Cardiac septum (tissue), 1 donor: ENCODE measurements at regions of chr19 and their contacts with region 1.

Region 1: DNA sequence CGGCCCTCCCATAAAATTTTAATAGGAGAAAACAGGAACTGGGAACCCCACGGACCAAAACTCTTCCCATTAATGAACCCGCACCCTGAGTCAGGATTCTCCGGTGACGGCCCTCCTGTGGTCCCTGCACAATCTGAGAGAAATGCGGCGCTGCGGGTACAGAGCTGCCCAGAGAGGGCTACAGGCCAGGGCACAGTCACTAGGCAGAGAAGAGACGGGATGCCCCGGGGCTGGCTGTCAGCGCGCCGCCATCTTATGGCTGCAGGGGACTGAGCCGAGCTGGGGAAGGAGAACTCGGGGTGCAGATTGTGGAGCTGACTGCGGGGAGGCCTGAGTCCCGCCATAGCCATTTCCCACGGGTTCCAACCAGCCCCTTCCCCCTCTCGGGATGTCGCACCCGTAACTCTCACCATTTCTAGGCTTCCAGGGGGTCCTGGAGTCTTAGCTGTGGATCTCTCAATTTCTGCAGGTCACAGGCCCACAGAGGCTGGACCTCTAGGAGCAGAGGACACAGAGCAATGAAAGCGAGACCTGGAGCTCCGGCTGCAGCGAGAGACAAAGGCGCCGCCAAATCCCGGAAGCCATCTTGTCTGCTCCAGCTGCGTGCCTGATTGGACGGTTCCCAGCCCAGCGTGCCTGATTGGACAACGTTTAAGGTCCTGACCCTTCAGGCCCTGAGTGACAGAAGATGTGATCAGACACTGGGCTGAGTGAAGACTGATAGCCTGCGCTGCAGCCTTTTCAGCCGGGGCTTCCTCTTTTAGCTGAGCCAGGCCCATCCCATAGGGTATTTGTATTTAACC is at the start of gene ZNF675:
- DNase-seq: peak; percentile 95
- total RNA-seq, gene ZNF675: 3.5 TPM

Region 2: GRCh38 chr19:23384858-23385257 is 302.0 kb before region 1 on chr19:
- intact Hi-C with region 1: loop called (anchors 10 kb)
- DNase-seq: no peak

Region 3: GRCh38 chr19:23665651-23666410 is 21.0 kb before region 1 on chr19:
- intact Hi-C with region 1: no loop called
- DNase-seq: no peak

Region 4: GRCh38 chr19:23758187-23759074 is 71.6 kb after region 1 on chr19 and contains the start of gene ZNF681:
- intact Hi-C with region 1: loop called (anchors 5 kb)
- DNase-seq: peak; percentile 92
- total RNA-seq, gene ZNF681: 0.38 TPM

Region 5: DNA sequence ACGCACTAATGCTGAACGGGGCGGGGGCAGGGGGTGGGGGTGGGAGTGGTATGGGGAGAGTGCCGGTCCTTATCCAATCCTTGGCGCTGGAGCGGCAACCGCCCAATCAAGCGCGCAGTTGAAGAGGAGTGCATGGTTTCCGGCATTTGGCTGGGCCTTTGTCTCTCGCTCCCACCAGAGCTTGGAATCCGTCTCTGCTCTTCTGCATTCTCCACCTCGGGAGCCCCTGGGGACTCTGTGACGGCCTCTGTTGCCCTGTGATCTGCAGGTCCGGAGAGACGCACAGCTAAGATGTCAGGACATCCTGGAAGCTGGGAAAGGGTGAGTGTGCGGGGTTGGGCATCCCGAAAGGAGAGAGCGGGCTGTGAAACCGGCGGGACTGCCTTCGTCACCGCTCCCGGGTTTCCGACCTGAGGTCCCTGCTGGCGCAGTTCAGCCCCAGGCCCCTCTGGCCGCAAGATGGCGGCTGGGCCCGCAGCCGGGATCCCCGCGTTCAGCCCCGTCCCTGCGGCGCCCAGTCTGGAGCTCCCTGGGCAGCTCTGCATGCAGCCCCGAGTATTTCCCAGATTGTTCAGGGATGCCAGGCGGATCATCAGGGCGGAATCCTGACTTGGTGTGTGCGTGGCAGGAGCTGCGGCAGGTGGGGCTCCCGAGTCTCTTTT is 346.6 kb after region 1 on chr19:
- intact Hi-C with region 1: loop called (anchors 5 kb)
- DNase-seq: peak; percentile 94